CD4-positive, alpha-beta T cell (primary cell): ENCODE measurements at regions of chr10 and their contacts with region 1.

Region 1: GRCh38 chr10:73859428-73859783 is 14.9 kb downstream of the CAMK2G start:
- DNase-seq: peak in 9 of 14 experiments; percentile 19 to 76 (median 39)
- ATAC-seq: peak; percentile 77
- H3K4me3 ChIP-seq: no peak overlapping the region
- H3K4me3 Mint-ChIP-seq: peak overlapping the region; percentile 42
- H3K27ac ChIP-seq: peak overlapping the region; percentile 49 to 61
- H3K27ac Mint-ChIP-seq: peak overlapping the region; percentile 85
- H3K4me1 ChIP-seq: peaks cover 85% of the 10 kb centered on the region
- H3K4me1 Mint-ChIP-seq: peaks cover 82% of the 10 kb centered on the region
- H3K27me3 ChIP-seq: no peaks in the 10 kb centered on the region
- H3K27me3 Mint-ChIP-seq: no peaks in the 10 kb centered on the region
- CTCF ChIP-seq: no peak

Region 2: GRCh38 chr10:73874267-73875138 is 15.1 kb after region 1 on chr10 and contains the start of gene CAMK2G:
- CTCF ChIA-PET with region 1: interaction called, 25 read pairs
- POLR2A ChIA-PET with region 1: interaction called, 51 read pairs
- intact Hi-C with region 1: no loop called
- DNase-seq: peak; percentile 66 to 94 (median 81)
- ATAC-seq: peak; percentile 76
- H3K4me3 ChIP-seq: peak within 1 kb of the TSS; percentile 95
- H3K4me3 Mint-ChIP-seq: peak within 1 kb of the TSS; percentile 91
- H3K27ac ChIP-seq: peak within 1 kb of the TSS; percentile 79 to 84
- H3K27ac Mint-ChIP-seq: peak within 1 kb of the TSS; percentile 94
- H3K4me1 ChIP-seq: peaks cover 67% of the 10 kb centered on the region
- H3K4me1 Mint-ChIP-seq: peaks cover 56% of the 10 kb centered on the region
- H3K27me3 ChIP-seq: no peaks in the 10 kb centered on the region
- H3K27me3 Mint-ChIP-seq: no peaks in the 10 kb centered on the region
- CTCF ChIP-seq: no peak
- total RNA-seq, gene CAMK2G: 34.4 to 38.4 TPM